T-cell (primary cell): ENCODE measurements at regions of chr1 and their contacts with region 1.

Region 1: GRCh38 chr1:101309334-101310311 is 72.8 kb downstream of the S1PR1 start:
- DNase-seq: peak; percentile 56 to 93 (median 78)
- ATAC-seq: peak; percentile 79 to 82 (median 80)
- H3K4me3 ChIP-seq: peak overlapping the region; percentile 27 to 38
- H3K4me3 Mint-ChIP-seq: peak overlapping the region; percentile 78 to 79 (median 79)
- H3K27ac ChIP-seq: peak overlapping the region; percentile 90
- H3K27ac Mint-ChIP-seq: peak overlapping the region; percentile 97 to 98
- H3K4me1 ChIP-seq: peaks cover 41 to 62% of the 10 kb centered on the region in 2 experiments
- H3K4me1 Mint-ChIP-seq: peaks cover 72 to 83% (median 74%) of the 10 kb centered on the region in 3 donors
- H3K27me3 ChIP-seq: no peaks in the 10 kb centered on the region
- H3K27me3 Mint-ChIP-seq: no peaks in the 10 kb centered on the region

Region 2: DNA sequence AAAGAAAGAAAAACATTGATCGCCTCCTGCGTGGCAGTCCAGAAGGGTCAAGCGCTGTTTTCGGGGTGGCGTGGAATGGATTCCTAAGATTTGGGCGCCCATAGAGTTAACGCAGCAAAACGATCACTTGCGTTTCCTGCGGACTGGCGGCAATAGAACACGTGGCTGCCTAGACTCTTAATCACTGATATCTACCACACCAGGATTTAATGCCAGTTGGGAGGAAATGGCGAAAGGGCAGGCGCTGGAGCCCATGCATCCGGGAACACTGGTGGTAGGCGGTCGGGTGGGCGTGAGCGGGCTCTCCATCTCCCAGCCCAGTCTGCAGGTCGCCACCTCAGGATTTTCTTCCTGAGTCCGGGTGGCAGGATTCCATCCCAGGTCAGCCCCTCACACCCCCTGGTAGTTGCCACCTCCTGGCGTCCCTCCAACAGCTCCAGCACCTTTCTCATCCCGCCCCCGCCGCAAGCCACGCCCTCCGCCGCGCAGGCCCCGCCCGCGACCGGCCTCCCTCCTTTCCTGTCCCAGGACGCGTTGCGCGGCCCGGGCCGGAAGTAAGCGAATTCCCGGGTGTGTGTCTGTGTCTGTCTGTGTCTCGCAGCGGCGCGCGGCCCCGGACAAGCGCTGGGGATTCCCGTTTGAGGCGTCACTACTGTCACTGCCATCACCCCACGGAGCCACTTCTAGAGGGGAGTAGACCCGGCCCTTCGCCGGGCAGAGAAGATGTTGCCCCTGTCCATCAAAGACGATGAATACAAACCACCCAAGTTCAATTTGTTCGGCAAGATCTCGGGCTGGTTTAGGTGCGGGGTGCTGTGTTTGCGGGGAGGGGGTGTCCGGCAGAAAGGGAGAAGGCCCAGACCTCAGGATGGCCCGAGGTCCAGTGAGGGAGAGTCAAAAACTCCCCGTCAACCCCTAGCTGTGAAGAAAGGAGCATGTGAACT is 413.8 kb before region 1 on chr1 and contains the start of gene SLC30A7:
- CTCF ChIA-PET with region 1: interaction called, 4 to 10 read pairs
- POLR2A ChIA-PET with region 1: interaction called in 1 of 2 experiments, 5 read pairs
- DNase-seq: peak; percentile 91 to 98 (median 95)
- ATAC-seq: peak; percentile 83 to 88 (median 85)
- H3K4me3 ChIP-seq: peak within 1 kb of the TSS; percentile 87 to 99
- H3K4me3 Mint-ChIP-seq: peak within 1 kb of the TSS; percentile 99 to 100 (median 100)
- H3K27ac ChIP-seq: peak within 1 kb of the TSS; percentile 98
- H3K27ac Mint-ChIP-seq: peak within 1 kb of the TSS; percentile 99
- H3K4me1 ChIP-seq: peaks cover 5 to 29% of the 10 kb centered on the region in 2 experiments
- H3K4me1 Mint-ChIP-seq: peaks cover 47 to 57% (median 55%) of the 10 kb centered on the region in 3 donors
- H3K27me3 ChIP-seq: no peaks in the 10 kb centered on the region
- H3K27me3 Mint-ChIP-seq: no peaks in the 10 kb centered on the region
- total RNA-seq, gene SLC30A7: 28.8 to 44.1 (median 36.9) TPM

Region 3: DNA sequence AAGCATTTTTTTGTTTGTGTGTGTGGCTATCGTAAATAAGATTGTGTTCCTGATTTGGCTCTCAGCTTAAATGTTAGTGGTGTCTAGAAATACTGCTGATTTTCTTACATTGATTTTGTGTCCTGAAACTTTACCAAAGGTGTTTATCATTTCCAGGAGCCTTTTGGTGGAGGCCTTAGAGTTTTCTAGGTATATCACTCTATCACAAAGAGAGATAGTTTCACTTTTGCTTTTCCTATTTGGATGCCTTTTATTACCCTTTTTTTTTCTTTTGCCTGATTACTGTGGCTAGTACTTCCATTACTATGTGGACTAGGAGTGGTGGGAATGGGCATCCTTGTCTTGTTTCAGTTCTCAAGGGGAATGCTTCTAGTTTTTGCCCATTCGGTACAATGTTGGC is 36.8 kb after region 1 on chr1:
- CTCF ChIA-PET with region 1: interaction called, 8 to 10 read pairs
- POLR2A ChIA-PET with region 1: interaction called in 1 of 2 experiments, 3 read pairs
- DNase-seq: peak in 1 of 35 experiments; percentile 15
- ATAC-seq: peak in 2 of 4 experiments; percentile 32 to 36
- H3K4me3 ChIP-seq: no peak overlapping the region
- H3K4me3 Mint-ChIP-seq: peak overlapping the region; percentile 45 to 72 (median 57)
- H3K27ac ChIP-seq: no peak overlapping the region
- H3K27ac Mint-ChIP-seq: peak overlapping the region; percentile 85 to 87
- H3K4me1 ChIP-seq: no peaks in the 10 kb centered on the region
- H3K4me1 Mint-ChIP-seq: peaks cover 38 to 42% (median 38%) of the 10 kb centered on the region in 3 donors
- H3K27me3 ChIP-seq: no peaks in the 10 kb centered on the region
- H3K27me3 Mint-ChIP-seq: no peaks in the 10 kb centered on the region

Region 4: GRCh38 chr1:101357444-101357986 is 47.9 kb after region 1 on chr1:
- CTCF ChIA-PET with region 1: interaction called, 30 to 170 read pairs
- POLR2A ChIA-PET with region 1: interaction called, 6 to 8 read pairs
- DNase-seq: peak; percentile 17 to 93 (median 61)
- ATAC-seq: peak; percentile 98 to 100 (median 99)
- H3K4me3 ChIP-seq: no peak overlapping the region
- H3K4me3 Mint-ChIP-seq: peak overlapping the region in 2 of 3 donors; percentile 42 to 53
- H3K27ac ChIP-seq: no peak overlapping the region
- H3K27ac Mint-ChIP-seq: peak overlapping the region; percentile 5 to 85
- H3K4me1 ChIP-seq: peaks cover 4 to 6% of the 10 kb centered on the region in 2 experiments
- H3K4me1 Mint-ChIP-seq: peaks cover 8 to 13% (median 10%) of the 10 kb centered on the region in 3 donors
- H3K27me3 ChIP-seq: no peaks in the 10 kb centered on the region
- H3K27me3 Mint-ChIP-seq: no peaks in the 10 kb centered on the region